Mucosa of descending colon (tissue), 3 donors: ENCODE measurements at regions of chr13 and their contacts with region 1.

Region 1: DNA sequence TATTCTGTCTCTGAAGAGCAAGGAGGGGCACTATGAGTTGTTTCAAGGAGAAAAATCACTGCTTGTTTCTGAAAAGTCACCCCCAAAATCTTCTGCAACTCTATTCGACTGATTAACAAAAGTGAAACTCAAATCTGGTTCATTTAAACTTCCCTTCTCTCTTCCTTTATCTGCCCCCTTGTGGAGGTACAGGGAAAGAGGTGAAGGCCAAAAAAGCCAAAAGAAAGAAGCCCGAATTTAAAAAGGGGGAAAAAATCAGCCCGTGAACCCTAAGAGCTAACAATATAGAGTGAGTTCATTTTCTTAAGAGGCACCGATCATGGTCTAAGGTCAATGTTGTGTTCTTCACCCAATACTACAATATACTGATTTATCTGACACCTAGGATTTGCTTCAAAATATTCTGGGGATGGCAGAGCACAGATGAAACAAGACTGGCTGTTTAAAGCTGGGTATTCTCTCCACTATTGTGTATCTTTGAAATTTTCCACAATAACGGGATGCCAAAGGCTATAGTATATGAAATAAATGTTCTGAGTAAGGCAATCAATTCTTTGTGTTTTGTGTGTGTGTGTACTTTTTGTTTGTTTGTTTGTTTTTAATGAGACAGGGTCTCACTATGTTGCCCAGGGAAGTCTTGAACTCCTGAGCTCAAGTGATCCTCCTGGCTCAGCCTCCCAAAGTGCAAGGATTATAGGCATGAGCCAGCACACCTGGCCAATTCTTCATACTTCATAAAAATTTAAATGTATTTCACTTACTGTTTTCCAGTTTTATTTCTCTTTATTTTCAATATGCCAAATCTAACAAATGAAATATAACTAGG is 55.0 kb upstream of the EEF1AKMT1 start:
- DNase-seq: peak in 1 of 3 donors; percentile 52
- ATAC-seq: peak; percentile 79
- H3K4me3 ChIP-seq: no peak overlapping the region
- H3K4me1 ChIP-seq: no peaks in the 10 kb centered on the region
- CTCF ChIP-seq: no peak

Region 2: GRCh38 chr13:20713751-20714150 is 115.0 kb before region 1 on chr13:
- intact Hi-C with region 1: loop called in 1 of 2 experiments (anchors 5 kb)
- DNase-seq: no peak
- ATAC-seq: peak; percentile 6
- H3K4me3 ChIP-seq: no peak overlapping the region
- H3K4me1 ChIP-seq: no peaks in the 10 kb centered on the region
- CTCF ChIP-seq: no peak

Region 3: DNA sequence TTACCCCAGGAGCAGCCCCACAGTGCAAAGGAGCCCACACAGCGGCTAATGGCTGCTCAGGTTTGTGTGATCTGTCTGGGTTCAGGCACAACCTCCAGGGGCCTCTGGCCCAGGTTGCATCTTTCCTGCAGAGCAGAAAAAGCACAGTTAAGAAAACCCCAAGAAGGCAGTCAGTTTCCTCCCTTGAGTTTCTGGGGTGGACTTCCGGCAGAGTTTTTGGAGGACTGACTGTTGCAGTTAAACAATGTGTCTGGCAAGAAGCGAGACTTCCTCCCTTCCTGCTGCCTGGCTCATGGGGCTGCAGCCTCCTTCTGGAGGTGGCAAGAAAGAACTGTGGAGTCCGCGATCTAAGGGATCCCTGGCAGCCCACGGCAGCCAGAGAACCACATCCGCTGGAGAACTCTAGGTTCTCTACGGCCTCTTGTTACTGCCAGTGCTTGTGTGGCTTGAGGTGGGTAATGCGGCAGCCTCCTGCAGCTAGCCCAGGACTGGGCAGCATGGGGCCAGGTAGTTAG is 516.0 kb after region 1 on chr13:
- intact Hi-C with region 1: no loop called
- DNase-seq: no peak
- ATAC-seq: peak; percentile 53
- H3K4me3 ChIP-seq: no peak overlapping the region
- H3K4me1 ChIP-seq: no peaks in the 10 kb centered on the region
- CTCF ChIP-seq: no peak